ENCODE measurements at regions of chr19 and their contacts with region 1.

Region 1: DNA sequence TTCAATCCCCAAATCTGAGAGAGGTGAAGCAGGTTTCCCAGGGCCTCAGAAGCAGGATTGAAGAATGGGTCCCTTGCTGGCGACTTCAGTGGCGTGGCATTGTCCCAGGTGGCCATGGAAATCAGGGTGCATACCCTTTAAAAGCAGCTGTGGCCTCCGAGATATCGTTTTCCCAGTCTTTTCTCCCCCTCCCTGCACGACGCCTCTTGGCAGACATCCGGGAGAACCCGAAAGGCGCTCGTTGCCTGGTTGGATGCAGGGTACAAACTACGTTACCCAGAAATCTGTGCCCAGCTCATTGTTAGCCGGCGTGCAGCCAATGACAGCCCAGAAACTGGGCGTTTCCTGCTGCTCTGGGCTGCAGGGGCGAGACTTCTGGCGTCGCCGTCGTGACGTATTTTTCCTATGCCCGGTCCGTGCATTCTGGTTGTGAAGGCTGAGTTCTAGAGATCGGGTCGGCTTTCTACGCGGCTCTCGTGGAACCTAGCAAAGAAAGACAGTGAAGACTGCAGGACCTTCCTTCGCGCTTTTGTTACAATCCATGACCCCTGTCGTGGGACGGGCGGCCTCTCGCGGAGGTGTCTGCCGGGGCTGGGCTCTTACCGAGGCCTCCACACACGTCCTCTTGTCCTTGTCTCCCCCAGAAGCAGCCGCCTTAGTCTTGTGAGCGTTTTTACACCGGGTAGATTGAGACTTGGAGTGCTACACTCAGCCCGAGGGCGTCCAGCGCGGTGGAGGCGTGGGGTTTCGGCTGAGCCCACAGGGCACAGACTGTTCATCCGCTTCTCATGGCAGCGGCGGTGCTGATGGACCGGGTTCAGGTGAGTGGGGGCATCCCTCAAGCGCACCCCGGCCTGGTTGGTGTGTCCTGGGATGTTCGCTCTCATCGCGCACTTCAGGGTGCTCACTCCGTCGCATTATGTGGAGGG is at the start of gene ZNF304:
- DNase-seq: peak; percentile 96
- ATAC-seq: peak; percentile 99
- total RNA-seq, gene ZNF304: 7.2 to 12.9 TPM

Region 2: DNA sequence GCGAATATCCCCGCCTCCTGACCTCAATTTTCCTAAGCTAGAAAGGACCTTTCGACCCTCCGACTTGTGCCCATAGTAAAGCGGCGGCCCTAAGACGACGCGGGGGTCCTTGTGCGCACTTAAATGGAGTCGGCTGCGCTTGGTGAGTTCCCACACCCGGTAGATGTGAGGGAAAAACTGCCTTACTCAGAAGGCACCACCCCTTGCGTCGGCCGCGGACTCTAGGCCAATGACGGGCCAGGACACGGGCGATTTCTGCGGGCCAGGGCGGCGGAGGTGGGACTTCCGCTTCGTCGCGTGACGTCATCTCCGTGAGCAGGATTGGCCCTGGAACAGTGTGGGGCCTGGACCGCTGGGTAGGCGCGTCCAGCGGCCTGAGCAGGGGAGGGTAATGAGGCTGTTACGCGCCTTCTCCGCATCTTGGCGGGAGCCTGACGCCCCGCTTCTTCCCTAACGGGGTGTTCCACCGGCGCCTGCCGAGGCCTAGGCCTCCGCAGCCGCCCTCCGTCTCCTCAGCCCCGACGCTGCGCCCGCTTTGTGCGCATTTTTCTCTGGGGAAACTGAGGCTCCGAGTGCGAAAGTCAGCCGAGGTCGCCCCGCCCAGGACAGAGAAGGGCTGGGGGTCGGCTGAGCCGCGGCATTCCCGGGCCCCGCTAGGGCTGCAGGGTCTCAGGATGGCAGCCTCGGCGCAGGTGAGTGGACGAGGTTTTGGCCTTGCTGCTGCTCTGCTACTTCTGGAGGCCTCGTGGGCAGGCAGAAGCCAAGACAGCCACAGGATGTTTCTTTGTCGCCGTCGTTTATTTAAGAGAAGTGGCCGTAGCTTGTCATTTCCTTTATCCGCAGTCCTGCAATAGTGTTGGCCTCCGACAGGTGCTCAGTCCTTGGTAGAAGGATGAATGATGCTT is 30.7 kb before region 1 on chr19 and contains the start of gene ZNF543:
- intact Hi-C with region 1: loop called in 1 of 2 experiments (anchors 5 kb)
- DNase-seq: peak; percentile 98
- ATAC-seq: peak; percentile 99 to 100
- total RNA-seq, gene ZNF543: 5.5 to 7.7 TPM

Measured in left cardiac atrium (tissue), 4 donors.